Activated naive CD4-positive, alpha-beta T cell treated with anti-CD3 and anti-CD28 coated beads for 36 hours (primary cell): ENCODE measurements at regions of chr11 and their contacts with region 1.

Region 1: DNA sequence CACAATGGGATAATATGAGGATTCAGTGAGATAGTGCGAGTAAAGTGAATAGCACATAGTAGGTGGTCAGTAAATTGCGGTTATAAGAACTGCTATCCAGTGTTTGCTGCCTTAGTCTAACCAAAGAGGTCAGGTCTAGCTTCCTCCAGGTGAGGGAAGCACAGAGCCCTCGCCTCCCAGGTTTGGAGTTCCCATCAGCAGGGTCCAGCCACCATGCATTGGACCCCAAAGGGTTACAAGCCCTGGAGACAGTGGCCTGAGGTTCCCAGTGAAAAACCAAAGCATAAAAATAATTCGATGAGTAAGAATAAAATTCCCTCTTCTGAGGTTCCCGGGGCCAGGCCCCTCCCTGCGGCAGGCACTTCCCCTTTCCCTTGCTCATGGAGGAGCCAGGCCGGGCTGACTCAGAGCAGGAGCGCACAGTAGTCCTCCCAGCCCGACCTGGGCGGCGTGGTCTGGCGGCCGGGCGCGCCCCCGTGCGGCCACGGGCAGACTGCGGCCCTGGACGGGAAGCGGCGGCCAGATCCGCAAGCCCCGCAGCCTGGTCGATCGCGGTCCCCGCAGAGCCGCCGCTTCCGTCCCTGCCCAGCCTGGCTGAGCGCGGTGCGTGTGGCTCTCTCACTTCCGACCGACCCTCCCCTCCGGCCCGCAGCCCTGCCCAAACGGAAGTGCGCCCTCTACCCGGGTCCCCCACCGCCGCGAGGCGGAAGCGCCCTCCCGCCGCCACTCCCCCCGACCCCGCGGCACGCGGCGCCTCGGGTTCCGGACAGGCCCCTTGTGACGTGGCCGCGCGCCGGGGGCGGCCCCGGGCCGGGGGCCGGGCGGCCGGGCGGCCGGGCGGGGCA is at the start of gene SLC39A13:
- DNase-seq: peak; percentile 91
- H3K4me3 Mint-ChIP-seq: peak within 1 kb of the TSS; percentile 92
- H3K27ac Mint-ChIP-seq: peak within 1 kb of the TSS; percentile 92
- H3K4me1 Mint-ChIP-seq: peaks cover 25% of the 10 kb centered on the region
- H3K27me3 Mint-ChIP-seq: no peaks in the 10 kb centered on the region
- total RNA-seq, gene SLC39A13: 9.2 TPM

Region 2: GRCh38 chr11:47225552-47226400 is 182.2 kb before region 1 on chr11:
- CTCF ChIA-PET with region 1: no interaction called
- intact Hi-C with region 1: no loop called
- DNase-seq: peak; percentile 57
- H3K4me3 Mint-ChIP-seq: no peak overlapping the region
- H3K27ac Mint-ChIP-seq: peak overlapping the region; percentile 19
- H3K4me1 Mint-ChIP-seq: peaks cover 25% of the 10 kb centered on the region
- H3K27me3 Mint-ChIP-seq: no peaks in the 10 kb centered on the region

Region 3: DNA sequence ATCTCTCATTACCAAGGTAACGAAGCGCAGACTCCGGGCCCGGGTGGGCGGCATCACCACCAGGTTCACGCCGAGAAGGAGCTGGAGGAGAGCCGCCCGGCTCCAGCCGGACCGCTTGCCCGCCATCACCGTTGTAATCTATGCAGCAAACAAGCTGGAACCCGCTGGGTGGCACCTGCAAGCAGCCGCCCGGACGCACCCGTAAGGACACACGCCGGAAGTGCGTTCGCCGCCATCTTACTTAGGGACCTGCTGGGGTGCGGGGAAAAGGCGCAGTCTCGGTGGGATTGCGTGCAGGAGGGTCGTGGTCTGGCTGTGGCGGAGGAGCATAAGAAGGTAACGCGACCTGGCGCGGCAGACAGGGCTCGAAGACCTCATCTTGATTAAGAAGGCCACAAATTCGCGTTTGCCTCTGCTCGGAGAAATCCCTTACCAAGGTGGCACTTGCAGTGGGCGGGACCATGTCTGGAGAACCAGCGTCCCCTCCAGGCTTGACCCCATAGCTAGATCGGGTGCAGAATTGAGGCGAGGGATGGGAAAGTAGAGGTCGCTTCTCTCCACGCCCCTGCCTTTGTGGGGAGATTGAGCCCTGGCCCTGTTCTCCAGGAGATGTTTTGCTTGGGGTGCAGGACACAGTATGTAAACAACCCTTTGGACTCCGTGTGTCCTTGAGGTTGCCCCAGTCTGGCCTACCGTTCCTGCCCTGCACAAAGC is 159.1 kb before region 1 on chr11 and contains the start of gene ACP2:
- CTCF ChIA-PET with region 1: interaction called, 6 read pairs
- intact Hi-C with region 1: loop called (anchors 1 kb)
- DNase-seq: peak; percentile 94
- H3K4me3 Mint-ChIP-seq: peak within 1 kb of the TSS; percentile 99
- H3K27ac Mint-ChIP-seq: peak within 1 kb of the TSS; percentile 97
- H3K4me1 Mint-ChIP-seq: peaks cover 24% of the 10 kb centered on the region
- H3K27me3 Mint-ChIP-seq: no peaks in the 10 kb centered on the region
- total RNA-seq, gene ACP2: 8.0 to 9.3 TPM

Region 4: DNA sequence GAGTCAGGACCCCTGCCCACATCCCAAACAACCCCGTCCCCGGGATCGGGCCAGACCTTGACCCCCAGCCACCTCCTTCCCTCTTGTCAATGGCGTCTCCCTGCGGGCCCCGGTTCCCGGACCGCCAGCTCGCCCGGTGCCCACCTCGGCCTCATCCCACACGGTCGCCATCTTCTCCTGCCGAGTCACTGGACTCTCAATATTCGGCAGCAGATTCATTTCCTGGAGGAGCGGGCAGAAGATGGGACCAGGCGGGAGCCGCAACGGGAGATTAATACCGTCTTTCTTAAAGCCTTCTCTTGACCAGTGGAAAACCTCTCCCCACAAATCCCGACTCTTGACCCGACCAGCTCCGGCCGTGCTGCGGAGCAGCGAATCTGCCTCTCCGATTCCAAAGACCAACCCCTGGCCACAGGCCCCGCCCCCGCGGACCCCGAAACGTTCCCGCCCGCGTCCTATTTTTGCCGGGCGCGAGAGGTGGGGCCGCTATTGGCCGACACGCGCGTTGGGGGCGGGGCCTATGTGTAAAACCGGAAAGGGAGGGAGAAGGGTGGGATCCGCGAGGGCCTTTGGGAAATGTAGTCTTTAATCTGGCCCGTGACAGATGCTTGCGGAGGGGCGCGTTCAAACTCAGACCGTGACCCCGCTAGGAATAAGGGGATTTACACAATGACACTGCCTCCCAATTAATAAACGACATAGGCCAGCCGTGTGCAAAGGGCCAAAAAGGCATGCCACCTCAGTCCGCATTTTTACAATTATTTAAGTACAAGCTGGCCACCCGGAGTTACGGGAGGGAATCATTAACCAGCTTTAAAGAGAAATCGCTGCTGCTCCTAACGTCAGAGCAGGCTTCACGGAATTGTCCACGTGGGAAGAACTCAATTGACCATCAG is 18.3 kb after region 1 on chr11 and contains the start of gene PSMC3:
- CTCF ChIA-PET with region 1: interaction called, 33 read pairs
- intact Hi-C with region 1: loop called (anchors 1 kb)
- DNase-seq: peak; percentile 99
- H3K4me3 Mint-ChIP-seq: peak within 1 kb of the TSS; percentile 98
- H3K27ac Mint-ChIP-seq: peak within 1 kb of the TSS; percentile 98
- H3K4me1 Mint-ChIP-seq: peaks cover 26% of the 10 kb centered on the region
- H3K27me3 Mint-ChIP-seq: no peaks in the 10 kb centered on the region
- total RNA-seq, gene PSMC3: 127 to 129 TPM

Region 5: GRCh38 chr11:47578524-47579460 is 170.8 kb after region 1 on chr11 and contains the starts of genes KBTBD4 and NDUFS3:
- CTCF ChIA-PET with region 1: no interaction called
- intact Hi-C with region 1: loop called (anchors 1 kb)
- DNase-seq: peak; percentile 90
- H3K4me3 Mint-ChIP-seq: peak within 1 kb of the TSS; percentile 97
- H3K27ac Mint-ChIP-seq: peak within 1 kb of the TSS; percentile 97
- H3K4me1 Mint-ChIP-seq: peaks cover 44% of the 10 kb centered on the region
- H3K27me3 Mint-ChIP-seq: no peaks in the 10 kb centered on the region
- total RNA-seq, gene KBTBD4: 13.8 to 15.4 TPM
- total RNA-seq, gene NDUFS3: 123 to 124 TPM